ENCODE measurements at regions of chr1 and their contacts with region 1.

Region 1: GRCh38 chr1:159187647-159188374 is 16.4 kb downstream of the CADM3 start:
- DNase-seq: no peak
- ATAC-seq: peak; percentile 12
- H3K4me3 Mint-ChIP-seq: peak overlapping the region; percentile 88
- H3K27ac Mint-ChIP-seq: peak overlapping the region; percentile 91
- H3K4me1 Mint-ChIP-seq: peaks cover 52% of the 10 kb centered on the region
- H3K27me3 Mint-ChIP-seq: peaks cover 3% of the 10 kb centered on the region
- CTCF ChIP-seq: no peak

Region 2: DNA sequence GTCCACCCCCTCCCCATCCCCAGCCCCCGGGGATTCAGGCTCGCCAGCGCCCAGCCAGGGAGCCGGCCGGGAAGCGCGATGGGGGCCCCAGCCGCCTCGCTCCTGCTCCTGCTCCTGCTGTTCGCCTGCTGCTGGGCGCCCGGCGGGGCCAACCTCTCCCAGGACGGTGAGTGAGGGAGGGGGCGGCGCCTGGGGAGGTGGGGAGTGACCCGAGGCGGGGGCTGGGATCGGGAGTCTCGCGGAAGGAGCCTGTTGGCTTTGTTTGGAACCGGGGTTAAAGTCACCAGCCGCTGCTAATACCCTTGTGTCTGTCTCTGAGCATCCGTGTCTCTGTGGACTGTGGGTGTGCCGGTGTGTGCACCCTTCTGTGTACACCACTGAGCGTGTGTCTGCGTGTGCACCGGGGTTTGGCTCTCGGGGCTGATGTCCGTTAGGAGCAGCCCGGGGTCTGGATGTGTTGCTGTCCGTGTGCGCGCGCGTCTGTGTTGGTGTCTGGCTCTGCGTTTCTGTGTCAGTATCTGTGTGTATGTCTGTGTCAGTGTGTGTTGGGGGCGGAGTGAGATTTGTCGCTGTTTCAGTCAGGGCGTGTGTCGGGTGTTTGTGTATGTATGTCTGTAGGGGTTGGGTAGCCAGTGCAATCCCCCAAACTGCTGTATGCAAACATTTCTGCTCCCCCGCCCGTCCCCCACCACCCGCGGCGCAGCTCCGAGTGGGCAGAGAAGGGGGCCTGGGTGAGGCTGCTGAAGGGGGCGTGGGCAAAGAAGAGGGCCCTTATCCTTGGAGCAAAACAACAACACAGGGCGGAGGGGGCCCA is 15.9 kb before region 1 on chr1:
- CTCF ChIA-PET with region 1: no interaction called
- POLR2A ChIA-PET with region 1: interaction called, 3 read pairs
- intact Hi-C with region 1: loop called (anchors 2 kb)
- DNase-seq: no peak
- ATAC-seq: peak; percentile 37
- H3K4me3 Mint-ChIP-seq: peak overlapping the region; percentile 61
- H3K27ac Mint-ChIP-seq: no peak overlapping the region
- H3K4me1 Mint-ChIP-seq: peaks cover 18% of the 10 kb centered on the region
- H3K27me3 Mint-ChIP-seq: peaks cover 29% of the 10 kb centered on the region
- CTCF ChIP-seq: no peak